AG04450 (cell line): ENCODE measurements at regions of chr3 and their contacts with region 1.

Region 1: DNA sequence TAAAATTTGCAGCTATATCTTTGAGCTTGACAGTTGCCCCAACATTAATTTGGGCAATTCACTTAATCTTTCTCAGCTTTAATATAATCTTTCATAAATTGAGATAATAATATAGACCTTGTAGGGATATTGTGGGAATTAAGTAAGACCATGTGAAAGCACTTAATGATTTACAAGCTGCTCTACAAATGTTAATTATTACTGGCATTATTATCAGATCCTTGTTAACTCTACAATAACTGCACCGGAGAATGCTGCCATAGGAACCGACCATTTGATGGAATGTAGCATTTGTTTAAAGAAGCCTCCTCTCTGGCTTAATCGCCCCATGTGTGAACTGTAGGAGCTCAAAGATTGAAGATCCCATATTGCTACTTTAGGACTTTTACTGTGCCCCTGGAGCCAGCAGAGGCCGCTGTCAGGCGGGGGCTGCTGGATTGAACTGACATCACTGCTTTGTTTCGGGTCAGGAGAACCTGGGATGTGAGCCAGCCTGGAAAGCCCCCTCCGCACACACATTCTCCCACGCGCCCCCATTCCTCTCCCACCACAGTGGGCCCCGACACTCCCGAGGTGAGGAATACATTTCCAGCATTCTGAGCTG is 154.2 kb upstream of the TNIK start:
- DNase-seq: no peak
- H3K4me3 ChIP-seq: no peak overlapping the region
- H3K27ac ChIP-seq: no peak overlapping the region
- H3K27me3 ChIP-seq: no peaks in the 10 kb centered on the region
- CTCF ChIP-seq: peak; percentile 76

Region 2: GRCh38 chr3:171604370-171604769 is 10.1 kb before region 1 on chr3:
- CTCF ChIA-PET with region 1: interaction called, 12 read pairs
- POLR2A ChIA-PET with region 1: no interaction called
- DNase-seq: no peak
- H3K4me3 ChIP-seq: no peak overlapping the region
- H3K27ac ChIP-seq: no peak overlapping the region
- H3K27me3 ChIP-seq: no peaks in the 10 kb centered on the region
- CTCF ChIP-seq: no peak

Region 3: GRCh38 chr3:171696805-171697204 is 82.4 kb after region 1 on chr3:
- CTCF ChIA-PET with region 1: no interaction called
- POLR2A ChIA-PET with region 1: no interaction called
- DNase-seq: no peak
- H3K4me3 ChIP-seq: no peak overlapping the region
- H3K27ac ChIP-seq: no peak overlapping the region
- H3K27me3 ChIP-seq: no peaks in the 10 kb centered on the region
- CTCF ChIP-seq: no peak